ENCODE measurements at regions of chr13 and their contacts with region 1.

Region 1: DNA sequence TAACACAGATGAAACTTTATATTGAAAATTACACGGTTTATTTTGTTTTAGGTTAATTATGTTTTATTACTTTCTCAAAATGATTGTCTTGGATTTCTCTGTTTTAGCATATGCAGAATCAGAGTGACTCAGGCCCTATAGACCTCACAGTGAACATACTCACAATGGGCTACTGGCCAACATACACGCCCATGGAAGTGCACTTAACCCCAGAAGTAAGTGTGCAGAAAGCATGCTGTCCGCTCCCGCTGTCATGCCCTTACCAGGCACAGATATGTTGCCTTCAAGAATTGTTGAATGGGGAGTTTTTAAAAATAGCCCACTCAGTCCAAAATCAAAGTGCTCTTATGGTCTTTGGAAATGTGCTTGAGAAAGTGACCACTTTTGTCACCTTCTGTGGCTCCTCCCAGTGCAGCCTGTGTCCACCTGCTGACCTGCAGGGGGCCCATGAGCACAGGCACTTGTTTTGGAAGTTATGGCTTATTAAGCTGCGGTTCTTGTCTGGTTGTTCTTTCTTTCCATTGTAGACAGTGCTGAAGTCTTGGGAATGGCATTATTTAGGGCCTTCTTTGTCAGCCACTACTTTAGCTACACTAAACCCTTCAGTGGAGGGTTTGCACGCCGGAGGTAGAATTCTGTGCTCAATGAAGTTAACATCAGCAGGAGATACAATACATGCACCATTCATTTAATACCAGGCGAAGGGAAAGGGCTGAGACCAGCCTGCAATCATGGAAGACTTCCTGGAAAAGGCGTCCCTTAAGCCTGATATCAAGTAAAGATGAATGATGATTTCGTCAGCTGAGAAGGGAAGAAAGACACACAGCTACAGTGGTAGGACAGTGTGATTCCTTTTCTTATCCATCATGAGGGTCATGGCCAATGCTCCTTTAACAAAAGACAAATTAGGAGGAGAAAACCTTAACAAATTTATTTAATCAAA is 36.7 kb downstream of the CUL4A start:
- H3K4me3 Mint-ChIP-seq: no peak overlapping the region
- H3K27ac Mint-ChIP-seq: no peak overlapping the region
- H3K4me1 Mint-ChIP-seq: no peaks in the 10 kb centered on the region
- H3K27me3 Mint-ChIP-seq: no peaks in the 10 kb centered on the region

Region 2: DNA sequence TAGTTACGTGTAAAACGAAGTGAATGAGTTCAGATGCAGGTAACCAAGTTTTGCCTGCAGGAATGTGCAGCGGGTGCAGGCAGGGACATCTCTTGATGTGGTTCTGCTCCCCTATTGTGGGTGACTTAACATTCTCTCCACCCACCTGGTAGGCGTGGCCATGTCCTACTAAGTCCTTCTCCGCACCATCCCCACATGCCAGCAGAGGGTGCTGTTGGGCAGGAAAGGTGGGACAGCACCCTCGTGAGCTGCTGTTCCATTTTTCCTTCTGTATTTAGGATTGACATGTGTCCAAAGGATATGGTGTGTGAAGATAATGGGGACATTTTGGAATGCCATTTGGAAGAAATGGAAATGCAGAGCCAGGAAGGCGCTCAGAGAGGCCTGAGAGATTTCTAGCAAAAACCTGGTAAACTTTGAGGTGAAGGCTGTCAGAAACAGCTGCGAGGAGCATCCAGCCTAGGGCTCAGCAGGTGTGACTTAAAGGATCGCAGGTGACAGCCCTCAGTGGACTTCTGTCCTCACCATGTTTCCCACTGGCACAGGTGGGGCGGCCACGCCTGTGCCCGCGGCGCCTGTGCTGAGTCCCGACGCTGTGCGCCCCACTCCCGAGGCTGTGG is 303.3 kb before region 1 on chr13:
- intact Hi-C with region 1: no loop called
- H3K4me3 Mint-ChIP-seq: peak overlapping the region; percentile 68
- H3K27ac Mint-ChIP-seq: no peak overlapping the region
- H3K4me1 Mint-ChIP-seq: peaks cover 11% of the 10 kb centered on the region
- H3K27me3 Mint-ChIP-seq: peaks cover 52% of the 10 kb centered on the region

Region 3: DNA sequence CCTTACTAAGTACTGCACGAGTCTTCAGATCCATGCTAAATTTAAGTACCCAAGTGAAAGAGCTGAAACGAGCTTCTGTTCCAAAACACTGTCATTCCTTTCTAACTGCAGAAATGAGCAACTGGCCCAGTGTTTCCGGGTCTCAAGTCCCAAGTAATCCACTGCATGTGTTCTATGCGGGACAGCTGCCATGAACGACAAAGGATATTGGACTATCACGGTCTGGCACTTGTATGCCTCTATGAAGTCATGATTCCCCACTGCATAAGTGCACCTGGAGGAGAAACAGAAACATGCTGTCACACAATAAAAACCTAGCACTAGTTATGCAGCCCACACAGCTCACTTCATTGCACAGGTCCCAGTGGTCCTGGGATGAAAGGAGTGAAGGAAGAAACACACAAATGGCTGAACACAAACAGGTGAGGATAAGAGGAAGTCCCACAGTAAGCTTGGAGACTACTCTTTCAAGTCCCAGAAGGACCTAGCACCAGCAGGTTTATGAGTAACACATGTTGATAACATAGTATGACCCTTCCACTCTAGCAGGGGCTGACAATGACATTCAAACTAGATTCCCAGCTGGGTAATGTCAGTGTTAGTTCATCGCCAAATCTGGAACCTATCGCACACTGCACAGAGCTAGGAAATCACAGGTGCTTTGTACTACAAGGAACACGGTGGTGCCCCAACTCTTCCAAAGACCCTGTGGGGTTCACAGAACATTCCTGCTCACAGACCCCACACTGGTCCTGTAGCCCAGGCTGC is 49.0 kb before region 1 on chr13:
- intact Hi-C with region 1: loop called (anchors 5 kb)
- H3K4me3 Mint-ChIP-seq: no peak overlapping the region
- H3K27ac Mint-ChIP-seq: no peak overlapping the region
- H3K4me1 Mint-ChIP-seq: peaks cover 3% of the 10 kb centered on the region
- H3K27me3 Mint-ChIP-seq: no peaks in the 10 kb centered on the region